ENCODE measurements at regions of chr5 and their contacts with region 1.

Region 1: DNA sequence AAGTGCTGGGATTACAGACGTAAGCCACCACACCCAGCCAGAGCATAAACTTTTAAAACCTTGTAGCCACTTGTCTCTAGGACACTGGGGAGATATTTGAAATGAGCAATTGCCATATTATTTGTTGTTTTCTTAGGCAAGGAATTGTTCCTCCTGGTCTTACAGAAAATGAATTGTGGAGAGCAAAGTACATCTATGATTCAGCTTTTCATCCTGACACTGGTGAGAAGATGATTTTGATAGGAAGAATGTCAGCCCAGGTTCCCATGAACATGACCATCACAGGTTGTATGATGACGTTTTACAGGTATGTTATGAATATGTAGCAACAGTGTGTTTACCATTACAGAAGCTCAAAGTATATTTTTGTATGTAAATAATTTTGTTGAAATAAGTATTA is 30.5 kb downstream of the SFXN1 start:
- DNase-seq: no peak
- ATAC-seq: no peak
- H3K4me3 ChIP-seq: no peak overlapping the region
- H3K4me3 Mint-ChIP-seq: no peak overlapping the region
- H3K27ac ChIP-seq: no peak overlapping the region
- H3K27ac Mint-ChIP-seq: no peak overlapping the region
- H3K4me1 ChIP-seq: peaks cover 0 to 6% of the 10 kb centered on the region in 2 donors
- H3K4me1 Mint-ChIP-seq: peaks cover 9% of the 10 kb centered on the region
- H3K27me3 ChIP-seq: no peaks in the 10 kb centered on the region
- H3K27me3 Mint-ChIP-seq: no peaks in the 10 kb centered on the region
- CTCF ChIP-seq: no peak

Region 2: DNA sequence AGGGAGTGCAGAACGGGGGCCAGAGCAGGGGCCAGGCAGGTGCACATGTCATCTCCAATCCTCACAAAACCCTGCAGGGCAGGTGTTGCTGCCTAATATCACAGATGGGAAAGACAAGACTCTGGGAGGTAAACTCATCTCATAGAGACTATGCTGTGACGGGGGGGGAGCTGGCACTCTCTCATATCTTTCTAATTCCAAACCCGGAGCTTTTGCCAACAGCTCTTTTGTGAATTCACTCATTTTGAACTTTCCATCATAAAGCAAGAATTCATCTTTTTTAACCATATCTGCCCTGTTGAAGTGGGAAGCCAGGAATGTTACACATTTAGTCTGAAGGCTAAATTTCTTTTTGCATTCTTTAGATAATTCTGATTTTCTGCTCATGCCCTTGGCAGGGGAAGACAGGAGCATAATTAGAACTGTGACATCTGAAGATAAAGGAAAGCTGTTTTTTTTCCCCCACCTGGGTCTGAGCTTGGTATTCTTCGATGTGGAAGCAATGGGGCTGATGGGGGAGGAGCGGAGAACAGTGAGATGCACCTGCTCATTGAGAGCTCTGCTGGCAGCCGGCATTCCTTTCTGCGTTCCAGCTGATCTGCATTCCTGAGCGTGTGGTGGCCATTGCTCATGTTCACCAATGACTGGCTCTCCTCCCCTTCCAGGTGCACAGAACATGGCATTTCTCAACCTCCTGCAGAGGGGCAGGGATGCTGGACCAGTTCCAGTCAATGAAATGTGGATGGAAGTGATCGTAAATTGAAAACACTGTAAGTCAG is 1304.2 kb before region 1 on chr5:
- CTCF ChIA-PET with region 1: no interaction called
- POLR2A ChIA-PET with region 1: no interaction called
- intact Hi-C with region 1: loop called (anchors 5 kb)
- DNase-seq: no peak
- ATAC-seq: no peak
- H3K4me3 ChIP-seq: no peak overlapping the region
- H3K4me3 Mint-ChIP-seq: no peak overlapping the region
- H3K27ac ChIP-seq: no peak overlapping the region
- H3K27ac Mint-ChIP-seq: no peak overlapping the region
- H3K4me1 ChIP-seq: no peaks in the 10 kb centered on the region
- H3K4me1 Mint-ChIP-seq: no peaks in the 10 kb centered on the region
- H3K27me3 ChIP-seq: peaks cover 0 to 3% (median 0%) of the 10 kb centered on the region in 4 experiments
- H3K27me3 Mint-ChIP-seq: no peaks in the 10 kb centered on the region
- CTCF ChIP-seq: no peak

Region 3: DNA sequence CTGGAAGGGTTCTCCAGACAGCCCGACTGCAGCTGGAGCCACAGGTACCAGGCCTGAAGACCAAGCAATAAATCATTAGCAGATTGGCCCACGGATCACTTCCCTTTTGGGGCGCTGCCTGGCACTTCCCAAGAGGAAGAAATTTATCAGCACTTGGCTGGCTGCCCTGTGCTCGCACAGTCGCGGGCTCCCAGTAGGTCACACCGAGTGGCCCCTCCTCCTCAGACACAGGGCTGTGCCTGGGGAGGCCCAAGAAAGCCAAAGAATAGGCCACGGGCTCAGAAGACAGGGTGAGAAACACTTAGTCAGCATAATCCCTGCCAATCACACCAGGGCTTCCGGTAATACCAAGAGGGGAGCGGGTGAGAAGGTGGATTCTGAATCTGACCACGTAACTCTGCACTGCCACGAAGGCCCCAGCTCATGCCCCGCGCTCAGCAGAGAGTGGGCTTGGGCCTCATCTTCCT is 900.2 kb before region 1 on chr5:
- CTCF ChIA-PET with region 1: no interaction called
- POLR2A ChIA-PET with region 1: no interaction called
- intact Hi-C with region 1: no loop called
- DNase-seq: no peak
- ATAC-seq: no peak
- H3K4me3 ChIP-seq: no peak overlapping the region
- H3K4me3 Mint-ChIP-seq: no peak overlapping the region
- H3K27ac ChIP-seq: no peak overlapping the region
- H3K27ac Mint-ChIP-seq: no peak overlapping the region
- H3K4me1 ChIP-seq: no peaks in the 10 kb centered on the region
- H3K4me1 Mint-ChIP-seq: no peaks in the 10 kb centered on the region
- H3K27me3 ChIP-seq: no peaks in the 10 kb centered on the region
- H3K27me3 Mint-ChIP-seq: no peaks in the 10 kb centered on the region
- CTCF ChIP-seq: no peak

Region 4: DNA sequence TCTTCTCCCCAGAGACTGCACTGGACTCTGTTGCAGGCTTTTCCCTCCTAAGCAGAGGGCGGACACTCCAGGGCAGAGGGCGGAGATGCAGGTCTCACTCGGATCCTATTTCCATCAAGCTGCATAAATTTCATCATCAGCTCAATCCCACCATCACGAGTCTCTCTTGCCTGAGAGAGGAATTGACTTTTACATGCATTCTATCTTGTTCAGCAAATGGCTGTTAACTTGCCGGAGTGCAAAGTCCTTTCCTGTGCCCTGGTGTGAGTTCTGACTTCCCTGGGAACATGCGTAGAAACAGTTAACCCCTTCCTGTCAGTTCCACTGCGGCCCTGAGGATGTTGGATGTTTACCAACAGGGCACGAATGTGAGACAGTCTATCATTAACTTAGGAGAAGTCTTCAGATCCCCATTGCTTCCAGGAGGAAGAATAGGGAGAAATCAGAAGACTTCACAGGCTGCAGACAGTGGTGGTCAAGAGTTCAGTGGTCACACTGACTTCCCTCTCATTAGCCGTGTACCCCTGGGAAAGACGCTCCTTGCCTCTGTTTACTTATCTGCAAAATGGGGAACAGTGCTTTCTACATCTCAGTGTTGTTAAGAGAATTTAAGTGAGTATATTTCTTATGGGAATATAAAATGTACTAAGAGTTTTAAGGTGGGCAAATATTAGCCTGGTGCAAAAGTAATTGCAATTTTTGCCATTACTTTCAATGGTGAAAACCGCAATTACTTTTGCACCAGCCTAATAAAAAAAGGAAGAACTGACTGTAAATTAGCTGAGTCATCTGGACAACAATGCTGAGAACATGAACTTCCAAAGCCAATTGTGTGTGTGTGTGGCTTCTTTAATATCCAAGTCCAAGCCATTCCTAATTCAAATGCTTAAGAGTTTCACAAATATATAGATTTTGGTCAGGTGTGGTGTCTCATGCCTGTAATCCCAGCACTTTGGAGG is 312.9 kb before region 1 on chr5:
- CTCF ChIA-PET with region 1: no interaction called
- POLR2A ChIA-PET with region 1: no interaction called
- intact Hi-C with region 1: no loop called
- DNase-seq: no peak
- ATAC-seq: no peak
- H3K4me3 ChIP-seq: no peak overlapping the region
- H3K4me3 Mint-ChIP-seq: no peak overlapping the region
- H3K27ac ChIP-seq: no peak overlapping the region
- H3K27ac Mint-ChIP-seq: no peak overlapping the region
- H3K4me1 ChIP-seq: no peaks in the 10 kb centered on the region
- H3K4me1 Mint-ChIP-seq: no peaks in the 10 kb centered on the region
- H3K27me3 ChIP-seq: no peaks in the 10 kb centered on the region
- H3K27me3 Mint-ChIP-seq: peaks cover 4% of the 10 kb centered on the region
- CTCF ChIP-seq: no peak

Region 5: GRCh38 chr5:175216991-175217390 is 291.9 kb before region 1 on chr5:
- CTCF ChIA-PET with region 1: no interaction called
- POLR2A ChIA-PET with region 1: no interaction called
- intact Hi-C with region 1: no loop called
- DNase-seq: no peak
- ATAC-seq: no peak
- H3K4me3 ChIP-seq: no peak overlapping the region
- H3K4me3 Mint-ChIP-seq: no peak overlapping the region
- H3K27ac ChIP-seq: no peak overlapping the region
- H3K27ac Mint-ChIP-seq: no peak overlapping the region
- H3K4me1 ChIP-seq: no peaks in the 10 kb centered on the region
- H3K4me1 Mint-ChIP-seq: no peaks in the 10 kb centered on the region
- H3K27me3 ChIP-seq: no peaks in the 10 kb centered on the region
- H3K27me3 Mint-ChIP-seq: peaks cover 7% of the 10 kb centered on the region
- CTCF ChIP-seq: no peak

Measured in B cell (primary cell).